Activated T-helper 1 cell treated with anti-CD3 and anti-CD28 coated beads, Interleukin-12 subunit alpha, Interleukin-12 subunit beta, Interleukin-2, Interleukin-4 antibody, amounts not matched to agents 30 ng/mL and 10 ng/mL and 1 ng/mL, durations not matched to agents 14 hours and 24 hours and 36 hours (primary cell): ENCODE measurements at regions of chr1 and their contacts with region 1.

Region 1: DNA sequence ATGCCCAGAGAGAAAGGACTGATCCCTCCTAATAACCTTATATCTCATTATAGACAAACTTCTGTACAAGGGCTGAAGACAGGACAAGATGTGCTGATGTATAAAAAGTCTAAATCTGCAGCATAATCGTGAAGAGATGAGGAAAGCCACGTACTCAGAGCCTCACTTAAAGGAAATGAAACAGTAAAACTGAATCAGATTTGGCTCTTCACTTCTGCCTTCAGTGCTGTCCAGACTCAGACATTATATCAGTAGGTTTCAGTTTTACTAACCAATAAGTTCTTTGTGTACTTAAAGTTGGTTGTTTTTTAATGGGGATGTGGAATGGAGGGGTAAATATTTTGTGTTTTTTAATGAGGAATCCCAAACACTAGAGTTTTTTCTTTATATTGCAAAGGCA is 45.3 kb upstream of the RGS1 start:
- DNase-seq: no peak
- H3K4me3 Mint-ChIP-seq: no peak overlapping the region
- H3K27ac Mint-ChIP-seq: peak overlapping the region; percentile 49
- H3K4me1 Mint-ChIP-seq: peaks cover 32% of the 10 kb centered on the region
- H3K27me3 Mint-ChIP-seq: peaks cover 4% of the 10 kb centered on the region

Region 2: GRCh38 chr1:192235127-192235526 is 295.1 kb before region 1 on chr1:
- intact Hi-C with region 1: no loop called
- DNase-seq: no peak
- H3K4me3 Mint-ChIP-seq: no peak overlapping the region
- H3K27ac Mint-ChIP-seq: no peak overlapping the region
- H3K4me1 Mint-ChIP-seq: no peaks in the 10 kb centered on the region
- H3K27me3 Mint-ChIP-seq: no peaks in the 10 kb centered on the region

Region 3: GRCh38 chr1:192496371-192497056 is 33.7 kb before region 1 on chr1:
- intact Hi-C with region 1: no loop called
- DNase-seq: no peak
- H3K4me3 Mint-ChIP-seq: no peak overlapping the region
- H3K27ac Mint-ChIP-seq: no peak overlapping the region
- H3K4me1 Mint-ChIP-seq: no peaks in the 10 kb centered on the region
- H3K27me3 Mint-ChIP-seq: peaks cover 2% of the 10 kb centered on the region

Region 4: GRCh38 chr1:192545896-192546521 is 15.8 kb after region 1 on chr1:
- intact Hi-C with region 1: loop called (anchors 2 kb)
- DNase-seq: no peak
- H3K4me3 Mint-ChIP-seq: no peak overlapping the region
- H3K27ac Mint-ChIP-seq: peak overlapping the region; percentile 74
- H3K4me1 Mint-ChIP-seq: peaks cover 79% of the 10 kb centered on the region
- H3K27me3 Mint-ChIP-seq: no peaks in the 10 kb centered on the region

Region 5: GRCh38 chr1:192580351-192580962 is 50.2 kb after region 1 on chr1:
- intact Hi-C with region 1: no loop called
- DNase-seq: no peak
- H3K4me3 Mint-ChIP-seq: peak overlapping the region; percentile 60
- H3K27ac Mint-ChIP-seq: no peak overlapping the region
- H3K4me1 Mint-ChIP-seq: peaks cover 71% of the 10 kb centered on the region
- H3K27me3 Mint-ChIP-seq: peaks cover 8% of the 10 kb centered on the region